SK-N-SH (cell line): ENCODE measurements at regions of chr17 and their contacts with region 1.

Region 1: DNA sequence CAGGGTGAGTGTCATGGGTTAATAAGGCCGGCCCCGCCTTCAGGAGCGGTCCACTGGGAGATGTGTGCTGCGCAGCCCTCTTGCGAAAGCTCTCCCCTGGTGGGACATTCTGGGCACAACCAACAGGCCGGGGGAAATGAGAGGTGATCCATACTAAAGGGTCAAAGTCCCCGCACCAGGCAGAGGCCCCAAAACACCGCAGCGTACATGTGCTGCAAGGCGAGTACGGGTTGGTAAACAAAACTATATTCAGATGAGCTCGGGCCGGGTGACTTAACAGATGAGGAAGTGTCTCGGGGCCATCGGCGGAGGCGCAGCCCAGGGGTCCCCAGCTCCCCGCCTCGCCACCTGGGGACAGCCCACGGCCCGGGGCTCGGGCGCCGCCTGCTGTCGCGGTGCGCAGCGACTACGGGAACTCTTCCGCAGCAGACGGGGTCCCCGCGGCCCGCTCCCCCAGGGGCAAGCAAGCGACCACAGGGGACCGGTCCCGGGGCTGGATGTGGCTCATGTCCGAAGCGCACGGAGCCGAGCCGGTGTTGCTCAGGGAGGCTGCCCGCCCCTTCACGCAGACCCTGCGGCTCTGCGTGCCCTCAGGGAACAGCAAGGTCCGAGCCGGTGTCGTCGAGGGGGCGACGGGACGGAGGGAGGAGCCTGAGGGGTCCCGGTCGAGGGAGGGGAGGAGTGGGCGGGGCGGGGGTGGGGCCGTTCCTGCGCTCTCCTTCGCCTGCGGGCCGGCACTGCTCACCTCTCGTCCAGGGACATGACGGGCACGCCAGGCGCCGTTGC is at the start of gene RAB37:
- DNase-seq: peak; percentile 82
- H3K4me3 ChIP-seq: no peak within 1 kb of the TSS; a peak in 1 of 4 replicates
- H3K27ac ChIP-seq: no peak within 1 kb of the TSS
- H3K4me1 ChIP-seq: no peaks in the 10 kb centered on the region; a peak in 1 of 4 replicates
- H3K27me3 ChIP-seq: peaks cover 54% of the 10 kb centered on the region
- CTCF ChIP-seq: peak; percentile 43
- EP300 ChIP-seq: no peak
- RAD21 ChIP-seq: peak; percentile 56
- polyA plus RNA-seq, gene RAB37: 0.13 and 0.25 TPM in 2 replicates

Region 2: GRCh38 chr17:74379495-74380085 is 357.1 kb before region 1 on chr17:
- CTCF ChIA-PET with region 1: interaction called, 15 read pairs
- POLR2A ChIA-PET with region 1: no interaction called
- DNase-seq: peak; percentile 98
- H3K4me3 ChIP-seq: no peak overlapping the region
- H3K27ac ChIP-seq: no peak overlapping the region
- H3K4me1 ChIP-seq: peaks cover 0 to 2% of the 10 kb centered on the region in 2 experiments; a peak in 1 of 4 replicates
- H3K27me3 ChIP-seq: no peaks in the 10 kb centered on the region
- CTCF ChIP-seq: peak; percentile 52
- EP300 ChIP-seq: no peak
- RAD21 ChIP-seq: peak; percentile 99

Region 3: DNA sequence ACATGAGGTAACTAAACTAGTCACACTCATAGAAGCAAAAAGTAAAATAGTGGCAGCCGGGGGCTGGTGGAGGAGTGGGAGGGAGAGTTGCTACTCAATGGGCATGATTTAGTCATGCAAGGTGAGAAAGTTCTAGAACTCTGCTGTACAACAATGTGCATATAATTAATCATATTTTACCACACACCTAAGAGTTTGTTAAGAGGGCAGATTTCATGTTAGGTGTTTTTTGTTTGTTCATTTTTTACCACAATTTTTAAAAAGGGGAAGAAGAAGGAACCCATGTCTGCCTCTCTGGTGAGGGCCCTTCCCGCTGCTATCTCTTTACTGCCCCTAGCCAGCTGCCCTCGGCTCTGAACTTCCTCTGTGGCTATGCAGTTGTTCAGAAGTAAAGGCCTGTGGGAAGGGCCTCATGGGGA is 216.7 kb before region 1 on chr17:
- CTCF ChIA-PET with region 1: no interaction called
- POLR2A ChIA-PET with region 1: no interaction called
- DNase-seq: no peak
- H3K4me3 ChIP-seq: no peak overlapping the region
- H3K27ac ChIP-seq: no peak overlapping the region
- H3K4me1 ChIP-seq: no peaks in the 10 kb centered on the region
- H3K27me3 ChIP-seq: no peaks in the 10 kb centered on the region
- CTCF ChIP-seq: no peak
- EP300 ChIP-seq: no peak
- RAD21 ChIP-seq: no peak

Region 4: GRCh38 chr17:74647871-74648672 is 88.6 kb before region 1 on chr17:
- CTCF ChIA-PET with region 1: interaction called, 66 read pairs
- POLR2A ChIA-PET with region 1: no interaction called
- DNase-seq: peak; percentile 67
- H3K4me3 ChIP-seq: no peak overlapping the region
- H3K27ac ChIP-seq: peak overlapping the region in 1 of 2 experiments; percentile 17; a peak in 1 of 4 replicates
- H3K4me1 ChIP-seq: peaks cover 0 to 26% of the 10 kb centered on the region in 2 experiments; a peak in 1 of 4 replicates
- H3K27me3 ChIP-seq: no peaks in the 10 kb centered on the region
- CTCF ChIP-seq: no peak
- EP300 ChIP-seq: peak in 1 of 2 experiments; percentile 60; a peak in 1 of 4 replicates
- RAD21 ChIP-seq: no peak

Region 5: DNA sequence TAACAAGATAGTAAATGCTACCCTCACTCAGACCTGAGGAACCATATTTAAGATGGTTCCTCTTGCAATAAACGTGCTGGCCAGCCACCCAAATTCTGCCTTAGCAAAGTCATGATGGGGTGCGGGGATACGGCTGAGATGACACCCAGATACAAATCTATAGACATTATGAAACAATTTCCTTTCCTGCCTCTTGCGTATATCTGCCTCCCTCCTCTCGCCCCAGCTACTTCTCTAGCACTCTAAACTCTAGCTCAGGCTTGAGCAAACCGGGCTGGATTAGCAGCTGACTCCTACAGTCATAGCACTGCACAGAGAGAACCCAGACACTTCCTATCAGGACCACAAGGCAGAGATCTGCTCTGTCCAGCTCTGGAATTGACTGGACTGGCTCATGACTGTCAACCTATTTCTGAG is 46.3 kb before region 1 on chr17:
- CTCF ChIA-PET with region 1: interaction called, 24 read pairs
- POLR2A ChIA-PET with region 1: no interaction called
- DNase-seq: no peak
- H3K4me3 ChIP-seq: no peak overlapping the region
- H3K27ac ChIP-seq: no peak overlapping the region
- H3K4me1 ChIP-seq: no peaks in the 10 kb centered on the region
- H3K27me3 ChIP-seq: no peaks in the 10 kb centered on the region
- CTCF ChIP-seq: no peak
- EP300 ChIP-seq: no peak
- RAD21 ChIP-seq: no peak

Region 6: GRCh38 chr17:74748529-74749365 is 12.0 kb after region 1 on chr17 and contains the start of gene NHERF1:
- CTCF ChIA-PET with region 1: interaction called, 96 read pairs
- POLR2A ChIA-PET with region 1: no interaction called
- DNase-seq: peak; percentile 100
- H3K4me3 ChIP-seq: peak within 1 kb of the TSS; percentile 90 to 97
- H3K27ac ChIP-seq: peak within 1 kb of the TSS in 1 of 2 experiments; percentile 77; a peak in 2 of 4 replicates
- H3K4me1 ChIP-seq: peaks cover 0 to 29% of the 10 kb centered on the region in 2 experiments; a peak in 1 of 4 replicates
- H3K27me3 ChIP-seq: no peaks in the 10 kb centered on the region
- CTCF ChIP-seq: peak; percentile 36
- EP300 ChIP-seq: peak in 1 of 2 experiments; percentile 30; a peak in 1 of 4 replicates
- RAD21 ChIP-seq: peak; percentile 54
- polyA plus RNA-seq, gene NHERF1: 26.9 and 40.1 TPM in 2 replicates

Region 7: GRCh38 chr17:74776044-74776977 is 39.6 kb after region 1 on chr17 and contains the start of gene NAT9:
- CTCF ChIA-PET with region 1: interaction called, 104 read pairs
- POLR2A ChIA-PET with region 1: interaction called, 3 read pairs
- DNase-seq: peak; percentile 100
- H3K4me3 ChIP-seq: peak within 1 kb of the TSS; percentile 87 to 90
- H3K27ac ChIP-seq: peak within 1 kb of the TSS; percentile 72 to 81
- H3K4me1 ChIP-seq: peaks cover 13 to 16% of the 10 kb centered on the region in 2 experiments; a peak in 3 of 4 replicates
- H3K27me3 ChIP-seq: no peaks in the 10 kb centered on the region
- CTCF ChIP-seq: no peak
- EP300 ChIP-seq: no peak
- RAD21 ChIP-seq: no peak
- polyA plus RNA-seq, gene NAT9: 117 and 190 TPM in 2 replicates

Region 8: GRCh38 chr17:74864866-74865395 is 128.2 kb after region 1 on chr17:
- CTCF ChIA-PET with region 1: interaction called, 44 read pairs
- POLR2A ChIA-PET with region 1: no interaction called
- DNase-seq: peak; percentile 93
- H3K4me3 ChIP-seq: no peak overlapping the region; a peak in 1 of 4 replicates
- H3K27ac ChIP-seq: no peak overlapping the region
- H3K4me1 ChIP-seq: peaks cover 0 to 10% of the 10 kb centered on the region in 2 experiments; a peak in 2 of 4 replicates
- H3K27me3 ChIP-seq: peaks cover 18% of the 10 kb centered on the region
- CTCF ChIP-seq: peak; percentile 99
- EP300 ChIP-seq: no peak
- RAD21 ChIP-seq: peak; percentile 99

Region 9: DNA sequence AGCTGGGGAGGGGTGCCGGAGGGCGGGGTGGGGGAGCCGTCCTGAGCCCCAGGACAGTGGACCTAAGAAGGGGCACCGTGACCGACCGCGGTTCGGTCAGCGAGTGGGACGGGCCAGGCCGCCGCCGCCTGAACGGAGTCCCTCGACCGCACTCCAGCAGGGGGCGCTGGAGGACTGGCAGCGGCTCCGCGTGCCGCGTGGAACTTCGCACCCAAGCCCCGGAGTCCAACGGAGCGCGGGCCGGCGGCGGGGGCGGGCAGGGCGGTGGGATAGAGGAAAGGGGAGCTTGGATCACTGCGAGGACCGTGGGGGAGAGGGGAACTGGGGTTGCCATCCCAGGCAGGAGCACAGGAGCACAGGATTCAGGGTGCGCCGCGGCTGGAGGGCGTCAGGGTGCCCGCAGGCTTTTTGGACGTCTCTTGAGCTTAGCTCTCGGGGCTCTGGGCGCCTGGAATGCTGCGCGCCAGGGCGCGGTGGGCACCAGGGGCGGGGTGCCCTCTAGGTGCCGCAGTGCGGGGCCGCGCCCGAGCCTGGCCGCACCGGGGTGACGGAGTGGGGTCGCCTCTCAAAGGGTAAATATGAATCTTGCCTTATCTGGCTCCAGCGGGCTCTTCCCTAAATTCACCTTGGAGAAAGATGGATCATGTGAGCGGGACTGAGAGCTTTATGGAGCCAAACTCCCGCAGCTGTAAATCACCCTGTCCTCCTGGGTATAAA is 187.0 kb after region 1 on chr17:
- CTCF ChIA-PET with region 1: no interaction called
- POLR2A ChIA-PET with region 1: no interaction called
- DNase-seq: peak; percentile 98
- H3K4me3 ChIP-seq: peak overlapping the region; percentile 42 to 62
- H3K27ac ChIP-seq: no peak overlapping the region
- H3K4me1 ChIP-seq: peaks cover 0 to 19% of the 10 kb centered on the region in 2 experiments; a peak in 1 of 4 replicates
- H3K27me3 ChIP-seq: peaks cover 71% of the 10 kb centered on the region
- CTCF ChIP-seq: peak; percentile 86
- EP300 ChIP-seq: no peak
- RAD21 ChIP-seq: peak; percentile 77